HCT116 (cell line): ENCODE measurements at regions of chr5 and their contacts with region 1.

Region 1: GRCh38 chr5:157476702-157477408 is 16.8 kb downstream of the NIPAL4 start:
- DNase-seq: peak; percentile 45
- ATAC-seq: peak; percentile 90
- H3K4me3 ChIP-seq: no peak overlapping the region
- H3K27ac ChIP-seq: no peak overlapping the region
- H3K4me1 ChIP-seq: no peaks in the 10 kb centered on the region
- H3K27me3 ChIP-seq: no peaks in the 10 kb centered on the region
- CTCF ChIP-seq: peak; percentile 79 to 93 (median 92)
- POLR2A ChIP-seq: no peak
- RAD21 ChIP-seq: peak; percentile 95

Region 2: DNA sequence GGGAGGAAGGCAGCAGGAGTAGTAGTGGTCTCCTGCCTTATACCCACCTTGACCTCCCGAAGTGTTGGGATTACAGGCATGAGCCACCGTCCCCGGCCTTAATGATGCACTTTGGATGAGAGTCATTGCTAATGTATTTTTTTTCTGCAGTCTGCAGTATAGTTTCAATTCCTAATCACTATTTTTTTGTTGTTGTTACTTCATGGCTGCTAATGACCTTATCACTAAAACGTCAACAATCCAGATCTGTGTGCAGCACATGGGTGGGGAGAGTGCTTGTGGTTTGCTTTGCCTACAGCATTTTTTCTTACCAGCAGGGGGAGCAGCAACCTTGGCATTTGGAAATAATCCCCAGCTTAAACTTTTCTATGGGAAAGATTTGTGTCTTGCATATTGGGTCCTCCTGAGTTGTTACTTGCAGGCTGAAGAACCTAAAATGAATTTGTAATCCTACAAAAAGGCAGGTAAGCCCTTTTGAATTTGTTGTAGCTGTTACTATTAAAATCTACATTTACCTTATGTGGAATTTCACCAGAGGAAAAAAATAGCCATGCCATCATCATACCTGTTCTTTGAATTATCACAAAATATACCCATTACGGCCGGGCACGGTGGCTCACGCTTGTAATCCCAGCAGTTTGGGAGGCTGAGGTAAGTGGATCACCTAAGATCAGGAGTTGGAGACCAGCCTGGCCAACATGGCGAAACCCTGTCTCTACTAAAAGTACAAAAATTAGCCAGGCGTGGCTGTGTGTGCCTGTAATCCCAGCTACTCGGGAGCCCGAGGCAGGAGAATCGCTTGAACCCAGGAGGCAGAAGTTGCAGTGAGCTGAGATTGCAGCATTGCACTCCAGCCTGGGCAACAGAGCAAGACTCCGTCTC is 327.9 kb before region 1 on chr5:
- CTCF ChIA-PET with region 1: interaction called, 5 read pairs
- POLR2A ChIA-PET with region 1: no interaction called
- RAD21 ChIA-PET with region 1: no interaction called
- intact Hi-C with region 1: loop called (anchors 5 kb)
- DNase-seq: peak; percentile 61
- ATAC-seq: peak; percentile 95
- H3K4me3 ChIP-seq: no peak overlapping the region
- H3K27ac ChIP-seq: no peak overlapping the region
- H3K4me1 ChIP-seq: no peaks in the 10 kb centered on the region
- H3K27me3 ChIP-seq: no peaks in the 10 kb centered on the region
- CTCF ChIP-seq: peak; percentile 77 to 86 (median 86)
- POLR2A ChIP-seq: no peak
- RAD21 ChIP-seq: peak; percentile 82

Region 3: GRCh38 chr5:157328277-157328912 is 148.5 kb before region 1 on chr5:
- CTCF ChIA-PET with region 1: interaction called, 18 read pairs
- POLR2A ChIA-PET with region 1: no interaction called
- RAD21 ChIA-PET with region 1: no interaction called
- intact Hi-C with region 1: loop called (anchors 1 kb)
- DNase-seq: peak; percentile 58
- ATAC-seq: peak; percentile 98
- H3K4me3 ChIP-seq: 0 out of 4 replicates have a peak overlapping the region, but pooled peaks of 1 of the 2 experiments have one; percentile 12
- H3K27ac ChIP-seq: no peak overlapping the region
- H3K4me1 ChIP-seq: peaks cover 0 to 4% of the 10 kb centered on the region in 2 experiments; a peak in 1 of 4 replicates
- H3K27me3 ChIP-seq: no peaks in the 10 kb centered on the region
- CTCF ChIP-seq: peak; percentile 92 to 95 (median 92)
- POLR2A ChIP-seq: no peak
- RAD21 ChIP-seq: peak; percentile 91

Region 4: GRCh38 chr5:157366741-157367674 is 109.8 kb before region 1 on chr5:
- CTCF ChIA-PET with region 1: interaction called, 5 read pairs
- POLR2A ChIA-PET with region 1: no interaction called
- RAD21 ChIA-PET with region 1: no interaction called
- intact Hi-C with region 1: loop called (anchors 1 kb)
- DNase-seq: no peak
- ATAC-seq: peak; percentile 85
- H3K4me3 ChIP-seq: no peak overlapping the region
- H3K27ac ChIP-seq: no peak overlapping the region
- H3K4me1 ChIP-seq: no peaks in the 10 kb centered on the region
- H3K27me3 ChIP-seq: no peaks in the 10 kb centered on the region
- CTCF ChIP-seq: peak; percentile 62 to 82 (median 71)
- POLR2A ChIP-seq: no peak
- RAD21 ChIP-seq: peak; percentile 93

Region 5: GRCh38 chr5:157502143-157502647 is 25.3 kb after region 1 on chr5:
- CTCF ChIA-PET with region 1: no interaction called
- POLR2A ChIA-PET with region 1: no interaction called
- RAD21 ChIA-PET with region 1: no interaction called
- intact Hi-C with region 1: no loop called
- DNase-seq: no peak
- ATAC-seq: no peak
- H3K4me3 ChIP-seq: no peak overlapping the region
- H3K27ac ChIP-seq: no peak overlapping the region
- H3K4me1 ChIP-seq: peaks cover 0 to 4% of the 10 kb centered on the region in 2 experiments; a peak in 1 of 4 replicates
- H3K27me3 ChIP-seq: no peaks in the 10 kb centered on the region
- CTCF ChIP-seq: no peak
- POLR2A ChIP-seq: no peak
- RAD21 ChIP-seq: no peak

Region 6: DNA sequence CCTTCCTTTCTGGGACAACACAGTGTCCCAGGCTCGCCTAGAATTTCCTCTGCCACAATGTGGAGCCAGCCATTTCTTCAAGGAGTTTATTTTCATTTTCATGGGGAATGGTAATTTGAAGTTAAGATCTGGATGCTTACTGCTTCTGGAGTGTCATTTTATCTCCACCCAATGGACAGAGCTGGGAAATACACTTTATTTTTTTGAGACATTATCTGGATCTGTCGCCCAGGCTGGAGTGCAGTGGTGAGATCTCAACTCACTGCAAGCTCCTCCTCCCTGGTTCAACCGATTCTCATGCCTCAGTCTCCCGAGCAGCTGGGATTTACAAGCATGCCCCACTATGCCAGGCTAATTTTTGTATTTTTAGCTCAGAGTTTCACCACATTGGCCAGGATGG is 241.7 kb after region 1 on chr5:
- CTCF ChIA-PET with region 1: no interaction called
- POLR2A ChIA-PET with region 1: no interaction called
- RAD21 ChIA-PET with region 1: no interaction called
- intact Hi-C with region 1: loop called (anchors 10 kb)
- DNase-seq: peak; percentile 19
- ATAC-seq: peak; percentile 94
- H3K4me3 ChIP-seq: no peak overlapping the region
- H3K27ac ChIP-seq: no peak overlapping the region
- H3K4me1 ChIP-seq: peaks cover 0 to 10% of the 10 kb centered on the region in 2 experiments; a peak in 2 of 4 replicates
- H3K27me3 ChIP-seq: no peaks in the 10 kb centered on the region
- CTCF ChIP-seq: peak; percentile 31 to 73 (median 63); a peak in 4 of 6 replicates
- POLR2A ChIP-seq: no peak
- RAD21 ChIP-seq: peak; percentile 93